Activated CD4-positive, alpha-beta memory T cell treated with anti-CD3 and anti-CD28 coated beads for 36 hours (primary cell): ENCODE measurements at regions of chr10 and their contacts with region 1.

Region 1: GRCh38 chr10:25738776-25739175 is 195.3 kb upstream of the MYO3A start:
- DNase-seq: no peak
- H3K4me3 Mint-ChIP-seq: no peak overlapping the region
- H3K27ac Mint-ChIP-seq: no peak overlapping the region
- H3K4me1 Mint-ChIP-seq: no peaks in the 10 kb centered on the region
- H3K27me3 Mint-ChIP-seq: peaks cover 4% of the 10 kb centered on the region

Region 2: DNA sequence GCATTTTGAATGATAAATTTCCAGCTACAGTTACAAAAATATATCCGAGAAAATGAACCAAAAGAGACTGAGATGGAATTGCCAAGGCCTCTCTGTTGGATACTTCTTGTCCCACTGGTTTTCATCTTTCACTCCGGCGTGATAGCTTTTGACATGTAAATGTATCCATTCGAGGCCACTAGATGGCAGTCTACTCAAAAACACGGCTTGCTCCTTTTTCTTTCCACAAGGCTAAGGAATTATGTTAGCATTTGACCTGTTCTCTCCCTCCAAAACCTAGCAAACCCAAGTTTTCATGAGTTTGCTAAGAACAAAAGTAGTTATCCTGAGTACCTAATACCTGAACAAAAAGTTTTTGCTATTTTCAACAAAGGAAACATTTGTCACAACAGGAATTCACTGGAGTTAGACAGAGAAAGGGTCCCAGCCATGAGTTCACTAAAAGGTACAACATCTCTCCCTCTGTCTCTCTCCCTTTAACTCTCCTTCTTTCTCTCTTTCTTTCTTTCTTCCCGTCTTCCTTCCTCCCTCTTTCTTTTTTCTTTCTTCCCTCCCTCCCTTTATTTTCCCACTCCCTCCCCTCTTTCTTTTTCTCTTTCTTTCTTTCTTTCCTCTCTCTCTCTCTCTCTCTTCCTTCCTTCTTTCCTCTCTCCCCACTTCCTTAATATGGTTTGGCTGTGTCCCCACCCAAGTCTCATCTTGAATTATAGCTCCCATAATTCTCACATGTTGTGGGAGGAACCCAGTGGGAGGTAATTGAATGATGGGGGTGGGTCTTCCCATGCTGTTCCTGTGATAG is 12.7 kb before region 1 on chr10:
- CTCF ChIA-PET with region 1: interaction called, 10 read pairs
- POLR2A ChIA-PET with region 1: no interaction called
- intact Hi-C with region 1: no loop called
- DNase-seq: no peak
- H3K4me3 Mint-ChIP-seq: no peak overlapping the region
- H3K27ac Mint-ChIP-seq: no peak overlapping the region
- H3K4me1 Mint-ChIP-seq: no peaks in the 10 kb centered on the region
- H3K27me3 Mint-ChIP-seq: peaks cover 2% of the 10 kb centered on the region